Transverse colon (tissue), 4 donors: ENCODE measurements at regions of chr12 and their contacts with region 1.

Region 1: GRCh38 chr12:54993161-54993835 is 8.7 kb upstream of the TESPA1 start:
- DNase-seq: peak; percentile 36
- H3K4me3 ChIP-seq: no peak overlapping the region
- H3K27ac ChIP-seq: no peak overlapping the region
- H3K4me1 ChIP-seq: peaks cover 0 to 5% (median 0%) of the 10 kb centered on the region in 4 donors
- H3K27me3 ChIP-seq: no peaks in the 10 kb centered on the region
- CTCF ChIP-seq: peak; percentile 82 to 92 (median 86)
- EP300 ChIP-seq: no peak
- POLR2A ChIP-seq: no peak

Region 2: GRCh38 chr12:55041345-55042055 is 48.2 kb after region 1 on chr12:
- in situ Hi-C with region 1: no loop called
- intact Hi-C with region 1: loop called (anchors 2 kb)
- DNase-seq: no peak
- H3K4me3 ChIP-seq: no peak overlapping the region
- H3K27ac ChIP-seq: no peak overlapping the region
- H3K4me1 ChIP-seq: no peaks in the 10 kb centered on the region
- H3K27me3 ChIP-seq: peaks cover 4% of the 10 kb centered on the region
- CTCF ChIP-seq: no peak
- EP300 ChIP-seq: no peak
- POLR2A ChIP-seq: no peak

Region 3: GRCh38 chr12:55073043-55074022 is 80.0 kb after region 1 on chr12:
- in situ Hi-C with region 1: loop called (anchors 5 to 10 kb)
- intact Hi-C with region 1: loop called (anchors 2 kb)
- DNase-seq: peak; percentile 72
- H3K4me3 ChIP-seq: no peak overlapping the region
- H3K27ac ChIP-seq: no peak overlapping the region
- H3K4me1 ChIP-seq: no peaks in the 10 kb centered on the region
- H3K27me3 ChIP-seq: peaks cover 26% of the 10 kb centered on the region
- CTCF ChIP-seq: peak; percentile 71 to 83 (median 82)
- EP300 ChIP-seq: no peak
- POLR2A ChIP-seq: no peak

Region 4: DNA sequence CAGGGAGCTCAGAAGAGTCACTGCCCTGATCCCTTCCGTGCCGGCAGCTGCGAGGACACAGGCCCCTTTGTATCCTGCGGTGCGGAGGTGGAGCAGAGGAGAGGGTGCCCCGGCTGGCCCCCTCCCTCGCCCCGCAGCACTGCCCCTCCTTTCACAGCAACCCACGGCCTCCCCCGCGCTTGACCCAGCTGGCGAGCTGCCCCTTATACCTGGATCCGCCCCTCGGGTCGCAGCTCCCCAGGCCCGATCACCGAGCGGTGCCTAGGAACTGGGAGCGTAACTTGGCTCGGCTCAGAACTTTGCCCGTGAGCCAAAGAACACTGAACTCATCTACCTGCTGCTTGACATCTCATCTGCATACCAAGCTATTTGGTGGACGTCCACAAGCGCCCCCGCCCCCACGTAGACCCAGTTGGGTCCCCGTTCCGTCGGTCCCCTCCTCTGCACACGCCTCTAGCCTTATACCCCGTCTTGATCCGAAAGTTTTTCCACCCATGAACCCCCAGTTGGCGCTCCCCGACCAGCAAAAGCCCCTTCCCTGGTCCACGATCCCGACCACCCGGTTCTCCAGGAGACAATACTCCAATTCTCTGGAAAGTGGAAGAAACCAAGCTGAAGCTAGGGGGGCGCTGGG is 836.8 kb after region 1 on chr12:
- in situ Hi-C with region 1: no loop called
- intact Hi-C with region 1: no loop called
- DNase-seq: peak; percentile 64
- H3K4me3 ChIP-seq: peak overlapping the region; percentile 62 to 85 (median 82)
- H3K27ac ChIP-seq: peak overlapping the region; percentile 95 to 97 (median 96)
- H3K4me1 ChIP-seq: peaks cover 6 to 52% (median 36%) of the 10 kb centered on the region in 4 donors
- H3K27me3 ChIP-seq: no peaks in the 10 kb centered on the region
- CTCF ChIP-seq: no peak
- EP300 ChIP-seq: no peak
- POLR2A ChIP-seq: peak; percentile 34

Region 5: DNA sequence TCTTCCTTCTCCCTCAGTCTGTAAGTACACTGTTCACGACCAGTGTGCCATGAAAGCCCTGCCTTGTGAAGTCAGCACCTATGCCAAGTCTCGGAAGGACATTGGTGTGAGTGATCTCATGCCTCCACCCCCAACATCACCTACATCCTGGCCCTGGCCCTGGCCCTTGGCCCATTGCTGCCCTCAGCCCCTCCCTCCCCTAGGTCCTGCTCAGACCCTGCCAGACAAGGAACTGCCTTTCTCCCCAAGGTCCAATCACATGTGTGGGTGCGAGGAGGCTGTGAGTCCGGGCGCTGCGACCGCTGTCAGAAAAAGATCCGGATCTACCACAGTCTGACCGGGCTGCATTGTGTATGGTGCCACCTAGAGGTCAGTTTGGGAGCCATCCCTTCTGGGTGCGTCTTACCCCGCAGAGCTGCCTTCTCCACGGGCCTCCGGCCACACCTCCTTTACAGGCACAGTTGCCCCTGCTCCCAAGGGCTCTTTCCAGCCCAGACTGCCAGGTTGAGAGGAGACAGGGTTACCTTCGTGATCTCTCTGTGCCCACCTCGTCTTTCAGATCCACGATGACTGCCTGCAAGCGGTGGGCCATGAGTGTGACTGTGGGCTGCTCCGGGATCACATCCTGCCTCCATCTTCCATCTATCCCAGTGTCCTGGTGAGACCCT is 946.9 kb after region 1 on chr12:
- in situ Hi-C with region 1: no loop called
- intact Hi-C with region 1: loop called (anchors 5 kb)
- DNase-seq: peak; percentile 92
- H3K4me3 ChIP-seq: no peak overlapping the region
- H3K27ac ChIP-seq: peak overlapping the region; percentile 58 to 72 (median 60)
- H3K4me1 ChIP-seq: peaks cover 0 to 14% (median 7%) of the 10 kb centered on the region in 4 donors
- H3K27me3 ChIP-seq: no peaks in the 10 kb centered on the region
- CTCF ChIP-seq: peak; percentile 87 to 94 (median 91)
- EP300 ChIP-seq: no peak
- POLR2A ChIP-seq: no peak

Region 6: DNA sequence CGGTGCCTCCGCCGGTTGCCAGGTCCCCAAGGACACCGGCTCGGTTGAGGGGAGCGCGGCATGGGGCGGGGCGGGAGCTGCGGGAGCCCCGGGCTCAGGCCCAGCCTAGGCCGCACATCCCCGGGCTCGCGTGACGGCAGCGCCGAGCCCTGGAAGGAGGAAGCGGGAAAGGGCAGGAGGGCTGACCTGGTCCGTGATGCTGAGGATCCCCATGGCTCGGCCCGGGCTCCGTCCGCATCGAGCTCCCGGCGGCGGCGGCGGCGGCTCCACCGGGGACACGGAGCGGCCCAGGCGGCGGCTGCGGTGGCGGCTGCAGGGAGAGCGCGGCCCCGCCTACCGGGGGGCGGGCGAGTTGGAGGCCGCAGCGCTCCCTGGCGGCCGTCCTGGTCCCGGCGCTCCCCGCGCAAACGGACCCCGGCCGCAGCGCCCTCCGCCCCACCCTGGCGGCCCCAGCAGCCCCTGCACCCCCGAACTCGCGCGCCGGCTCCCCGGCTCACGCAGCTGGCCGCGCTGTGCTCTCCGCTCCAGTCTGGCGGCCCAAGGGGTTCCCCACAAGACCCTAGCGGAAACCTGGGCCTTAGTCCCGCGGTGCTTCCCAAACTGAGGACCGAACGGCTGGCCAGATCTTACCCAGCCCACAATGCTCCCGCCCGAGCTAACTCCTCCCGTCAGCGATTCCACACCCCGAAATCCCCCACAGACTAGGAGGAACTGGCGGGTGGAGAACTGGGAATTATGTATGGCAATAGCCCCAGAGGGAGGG is 1264.9 kb after region 1 on chr12 and contains the start of gene ANKRD52:
- in situ Hi-C with region 1: no loop called
- intact Hi-C with region 1: no loop called
- DNase-seq: peak; percentile 81
- H3K4me3 ChIP-seq: peak within 1 kb of the TSS; percentile 66 to 83 (median 72)
- H3K27ac ChIP-seq: peak within 1 kb of the TSS; percentile 87 to 93 (median 90)
- H3K4me1 ChIP-seq: peaks cover 16 to 23% (median 22%) of the 10 kb centered on the region in 4 donors
- H3K27me3 ChIP-seq: no peaks in the 10 kb centered on the region
- CTCF ChIP-seq: peak; percentile 36 to 80 (median 64)
- EP300 ChIP-seq: no peak
- POLR2A ChIP-seq: no peak
- total RNA-seq, gene ANKRD52: 28.4 to 120 (median 40.0) TPM